ENCODE measurements at regions of chr17 and their contacts with region 1.

Region 1: DNA sequence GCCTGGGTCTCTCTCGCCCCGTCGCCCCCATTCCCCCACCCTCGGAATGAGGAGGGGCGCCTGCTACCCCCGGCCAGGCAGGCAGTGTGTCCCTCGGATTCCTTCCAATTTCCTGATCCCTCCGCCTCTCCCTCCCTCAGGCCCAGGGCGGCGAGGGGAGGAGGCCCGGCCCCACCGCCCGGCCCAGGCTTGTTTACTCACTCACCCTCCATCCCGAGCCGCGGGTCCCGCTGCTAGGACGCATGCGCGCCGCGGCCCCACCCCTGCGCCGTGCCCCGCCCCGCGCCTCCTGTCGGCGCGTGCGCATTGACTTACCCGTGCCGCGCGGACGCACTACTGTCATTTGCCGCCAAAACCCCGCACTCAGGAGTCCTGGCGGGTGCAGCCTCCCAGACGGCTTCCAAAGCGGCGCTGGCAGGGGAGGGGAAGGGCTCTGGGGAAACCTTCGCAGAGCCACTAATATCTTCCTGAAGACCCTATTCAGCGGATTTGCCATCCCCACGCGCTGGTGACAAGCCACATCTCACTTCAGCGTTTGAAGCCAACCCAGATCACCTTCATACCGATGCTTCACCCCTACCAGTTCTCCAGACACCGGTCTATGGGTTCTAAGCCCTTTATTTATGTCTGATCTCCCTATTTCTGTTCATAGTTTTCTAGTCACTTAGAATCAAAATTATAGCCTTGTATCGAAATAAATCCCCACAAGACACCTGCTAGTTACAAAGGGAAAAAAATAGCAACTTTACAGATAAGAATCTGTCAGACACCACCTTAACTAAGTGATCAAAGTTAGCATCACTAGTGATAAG is at the start of gene EZH1:
- DNase-seq: peak; percentile 95
- H3K4me3 Mint-ChIP-seq: peak within 1 kb of the TSS; percentile 95
- H3K27ac Mint-ChIP-seq: peak within 1 kb of the TSS; percentile 94
- H3K4me1 Mint-ChIP-seq: peaks cover 20% of the 10 kb centered on the region
- H3K27me3 Mint-ChIP-seq: peaks cover 8% of the 10 kb centered on the region
- total RNA-seq, gene EZH1: 29.7 to 33.9 TPM

Region 2: GRCh38 chr17:42609182-42609813 is 135.7 kb before region 1 on chr17 and contains the starts of genes RETREG3 and TUBG1:
- CTCF ChIA-PET with region 1: no interaction called
- POLR2A ChIA-PET with region 1: interaction called, 4 read pairs
- intact Hi-C with region 1: loop called (anchors 1 kb)
- DNase-seq: peak; percentile 100
- H3K4me3 Mint-ChIP-seq: peak within 1 kb of the TSS; percentile 99
- H3K27ac Mint-ChIP-seq: peak within 1 kb of the TSS; percentile 91
- H3K4me1 Mint-ChIP-seq: peaks cover 41% of the 10 kb centered on the region
- H3K27me3 Mint-ChIP-seq: no peaks in the 10 kb centered on the region
- total RNA-seq, gene RETREG3: 33.7 to 35.3 TPM
- total RNA-seq, gene TUBG1: 92.6 to 101 TPM

Region 3: GRCh38 chr17:42704837-42705494 is 40.0 kb before region 1 on chr17:
- CTCF ChIA-PET with region 1: no interaction called
- POLR2A ChIA-PET with region 1: no interaction called
- intact Hi-C with region 1: loop called (anchors 2 kb)
- DNase-seq: peak; percentile 73
- H3K4me3 Mint-ChIP-seq: no peak overlapping the region
- H3K27ac Mint-ChIP-seq: peak overlapping the region; percentile 18
- H3K4me1 Mint-ChIP-seq: peaks cover 46% of the 10 kb centered on the region
- H3K27me3 Mint-ChIP-seq: no peaks in the 10 kb centered on the region

Region 4: DNA sequence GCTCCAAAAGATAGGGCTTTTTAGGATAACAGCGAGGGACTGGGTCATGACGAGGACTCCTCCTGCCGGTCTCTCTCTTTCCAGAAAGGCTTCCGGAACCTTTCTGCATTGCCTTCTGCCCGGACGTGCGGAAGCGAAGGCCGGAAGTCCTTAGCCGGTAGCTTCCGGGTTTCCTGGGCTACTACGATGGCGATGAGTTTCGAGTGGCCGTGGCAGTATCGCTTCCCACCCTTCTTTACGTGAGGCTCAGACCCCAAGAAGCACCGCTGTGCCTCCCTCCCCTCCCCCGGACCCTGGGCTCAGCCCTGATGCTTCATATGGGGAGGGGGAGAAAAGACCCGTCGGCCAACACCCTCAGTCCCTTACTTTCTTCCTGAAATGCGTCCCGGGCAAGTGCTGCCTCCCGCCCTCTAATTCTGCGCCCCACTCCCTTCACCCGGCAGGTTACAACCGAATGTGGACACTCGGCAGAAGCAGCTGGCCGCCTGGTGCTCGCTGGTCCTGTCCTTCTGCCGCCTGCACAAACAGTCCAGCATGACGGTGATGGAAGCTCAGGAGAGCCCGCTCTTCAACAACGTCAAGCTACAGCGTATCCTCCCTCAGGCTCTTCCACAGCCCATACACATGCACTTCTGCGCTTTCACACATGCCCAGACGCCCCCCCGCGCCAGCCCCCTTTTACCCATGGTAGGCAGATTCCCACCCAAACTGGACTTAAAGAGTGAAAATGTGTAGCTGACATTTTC is 28.5 kb after region 1 on chr17 and contains the start of gene VPS25:
- CTCF ChIA-PET with region 1: no interaction called
- POLR2A ChIA-PET with region 1: no interaction called
- intact Hi-C with region 1: no loop called
- DNase-seq: peak; percentile 84
- H3K4me3 Mint-ChIP-seq: peak within 1 kb of the TSS; percentile 100
- H3K27ac Mint-ChIP-seq: peak within 1 kb of the TSS; percentile 87
- H3K4me1 Mint-ChIP-seq: peaks cover 22% of the 10 kb centered on the region
- H3K27me3 Mint-ChIP-seq: no peaks in the 10 kb centered on the region
- total RNA-seq, gene VPS25: 57.5 to 58.6 TPM